ENCODE measurements at regions of chr3 and their contacts with region 1.

Region 1: DNA sequence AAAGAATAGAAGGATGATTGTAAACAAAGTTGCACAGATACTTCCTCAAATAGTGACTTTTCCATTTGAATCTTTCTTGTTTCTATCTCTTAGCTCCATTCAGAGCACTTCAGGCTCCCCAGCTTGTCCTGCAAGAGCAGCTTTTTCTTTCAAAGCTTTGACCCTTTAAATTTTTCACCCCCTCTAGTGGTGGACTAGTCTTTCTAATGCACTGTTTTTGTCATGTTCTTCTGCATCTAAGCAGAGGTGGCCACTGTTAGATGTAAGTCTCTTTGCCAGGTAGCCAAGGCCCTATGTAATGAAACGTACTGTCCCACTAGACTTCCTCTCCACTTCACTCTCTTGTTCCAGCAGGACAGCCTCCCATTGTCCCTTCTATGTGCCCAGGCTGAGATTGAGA is 74.0 kb upstream of the MANF start:
- DNase-seq: no peak
- H3K4me3 ChIP-seq: no peak overlapping the region
- H3K27ac ChIP-seq: no peak overlapping the region
- H3K4me1 ChIP-seq: no peaks in the 10 kb centered on the region
- H3K27me3 ChIP-seq: no peaks in the 10 kb centered on the region
- CTCF ChIP-seq: no peak
- EP300 ChIP-seq: no peak
- POLR2A ChIP-seq: no peak

Region 2: DNA sequence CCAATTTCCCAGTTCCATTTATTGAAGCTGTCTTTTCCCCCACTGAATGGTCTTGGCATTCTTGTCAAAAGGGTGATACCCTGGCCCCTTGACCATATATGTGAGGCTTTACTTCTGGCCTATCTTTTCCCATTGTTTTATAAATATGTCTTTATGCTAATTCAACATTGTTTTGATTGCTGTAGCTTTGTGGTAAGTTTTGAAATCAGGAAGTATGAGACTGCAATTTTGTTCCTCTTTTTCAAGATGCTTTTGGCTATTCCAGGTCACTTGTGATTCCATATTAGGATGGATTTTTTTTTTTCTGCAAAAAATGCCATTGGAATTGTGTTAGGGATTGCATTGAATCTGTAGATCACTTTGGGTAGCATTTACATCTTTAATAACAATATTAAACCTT is 67.1 kb before region 1 on chr3:
- intact Hi-C with region 1: no loop called
- DNase-seq: no peak
- H3K4me3 ChIP-seq: no peak overlapping the region
- H3K27ac ChIP-seq: no peak overlapping the region
- H3K4me1 ChIP-seq: no peaks in the 10 kb centered on the region
- H3K27me3 ChIP-seq: no peaks in the 10 kb centered on the region
- CTCF ChIP-seq: no peak
- EP300 ChIP-seq: no peak
- POLR2A ChIP-seq: no peak

Region 3: GRCh38 chr3:51729042-51729633 is 418.1 kb after region 1 on chr3:
- intact Hi-C with region 1: loop called in 1 of 4 experiments (anchors 5 kb)
- DNase-seq: no peak
- H3K4me3 ChIP-seq: no peak overlapping the region
- H3K27ac ChIP-seq: no peak overlapping the region
- H3K4me1 ChIP-seq: no peaks in the 10 kb centered on the region
- H3K27me3 ChIP-seq: no peaks in the 10 kb centered on the region
- CTCF ChIP-seq: no peak
- EP300 ChIP-seq: no peak
- POLR2A ChIP-seq: no peak